Ascending aorta (tissue), 2 donors: ENCODE measurements at regions of chr2 and their contacts with region 1.

Region 1: GRCh38 chr2:203804070-203804469 is 63.5 kb upstream of the CTLA4 start:
- DNase-seq: peak in 1 of 2 donors; percentile 81
- H3K4me3 ChIP-seq: no peak overlapping the region
- H3K27ac ChIP-seq: peak overlapping the region; percentile 20 to 77
- H3K4me1 ChIP-seq: peaks cover 0 to 12% of the 10 kb centered on the region in 2 donors
- H3K27me3 ChIP-seq: no peaks in the 10 kb centered on the region
- CTCF ChIP-seq: no peak

Region 2: GRCh38 chr2:203394519-203395227 is 409.4 kb before region 1 on chr2:
- intact Hi-C with region 1: no loop called
- DNase-seq: no peak
- H3K4me3 ChIP-seq: no peak overlapping the region
- H3K27ac ChIP-seq: no peak overlapping the region
- H3K4me1 ChIP-seq: no peaks in the 10 kb centered on the region
- H3K27me3 ChIP-seq: no peaks in the 10 kb centered on the region
- CTCF ChIP-seq: no peak

Region 3: GRCh38 chr2:203578759-203579643 is 225.1 kb before region 1 on chr2:
- intact Hi-C with region 1: loop called (anchors 5 kb)
- DNase-seq: peak in 1 of 2 donors; percentile 76
- H3K4me3 ChIP-seq: no peak overlapping the region
- H3K27ac ChIP-seq: peak overlapping the region; percentile 56 to 76
- H3K4me1 ChIP-seq: peaks cover 3 to 21% of the 10 kb centered on the region in 2 donors
- H3K27me3 ChIP-seq: no peaks in the 10 kb centered on the region
- CTCF ChIP-seq: no peak

Region 4: DNA sequence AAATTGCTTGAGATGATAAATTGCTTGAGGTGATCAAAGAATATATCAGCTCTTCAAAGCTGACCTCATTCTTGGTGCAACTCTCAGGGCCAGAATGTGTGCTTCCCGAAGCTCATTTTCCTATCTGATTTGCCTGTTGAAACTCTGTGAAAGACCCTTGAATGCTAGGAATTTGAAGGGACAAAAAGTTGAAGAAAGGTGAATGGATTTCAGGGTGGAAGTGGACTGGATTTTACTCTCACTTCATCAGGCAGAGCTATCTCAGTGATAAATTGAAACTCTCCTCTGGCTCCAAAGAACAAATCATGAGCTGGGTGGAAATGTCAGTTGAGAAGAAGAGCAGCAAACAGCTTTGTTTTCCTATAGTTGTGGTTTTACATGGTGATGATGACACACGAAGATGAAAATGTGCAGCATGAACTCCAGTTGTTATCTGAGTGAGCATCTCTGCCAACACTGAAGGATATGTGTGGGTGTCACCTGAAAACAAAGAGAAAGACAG is 63.2 kb before region 1 on chr2:
- intact Hi-C with region 1: loop called (anchors 5 kb)
- DNase-seq: no peak
- H3K4me3 ChIP-seq: no peak overlapping the region
- H3K27ac ChIP-seq: no peak overlapping the region
- H3K4me1 ChIP-seq: peaks cover 0 to 2% of the 10 kb centered on the region in 2 donors
- H3K27me3 ChIP-seq: no peaks in the 10 kb centered on the region
- CTCF ChIP-seq: no peak

Region 5: GRCh38 chr2:204491528-204491927 is 687.5 kb after region 1 on chr2:
- intact Hi-C with region 1: no loop called
- DNase-seq: no peak
- H3K4me3 ChIP-seq: no peak overlapping the region
- H3K27ac ChIP-seq: no peak overlapping the region
- H3K4me1 ChIP-seq: no peaks in the 10 kb centered on the region
- H3K27me3 ChIP-seq: no peaks in the 10 kb centered on the region
- CTCF ChIP-seq: no peak